ENCODE measurements at regions of chr4 and their contacts with region 1.

Region 1: DNA sequence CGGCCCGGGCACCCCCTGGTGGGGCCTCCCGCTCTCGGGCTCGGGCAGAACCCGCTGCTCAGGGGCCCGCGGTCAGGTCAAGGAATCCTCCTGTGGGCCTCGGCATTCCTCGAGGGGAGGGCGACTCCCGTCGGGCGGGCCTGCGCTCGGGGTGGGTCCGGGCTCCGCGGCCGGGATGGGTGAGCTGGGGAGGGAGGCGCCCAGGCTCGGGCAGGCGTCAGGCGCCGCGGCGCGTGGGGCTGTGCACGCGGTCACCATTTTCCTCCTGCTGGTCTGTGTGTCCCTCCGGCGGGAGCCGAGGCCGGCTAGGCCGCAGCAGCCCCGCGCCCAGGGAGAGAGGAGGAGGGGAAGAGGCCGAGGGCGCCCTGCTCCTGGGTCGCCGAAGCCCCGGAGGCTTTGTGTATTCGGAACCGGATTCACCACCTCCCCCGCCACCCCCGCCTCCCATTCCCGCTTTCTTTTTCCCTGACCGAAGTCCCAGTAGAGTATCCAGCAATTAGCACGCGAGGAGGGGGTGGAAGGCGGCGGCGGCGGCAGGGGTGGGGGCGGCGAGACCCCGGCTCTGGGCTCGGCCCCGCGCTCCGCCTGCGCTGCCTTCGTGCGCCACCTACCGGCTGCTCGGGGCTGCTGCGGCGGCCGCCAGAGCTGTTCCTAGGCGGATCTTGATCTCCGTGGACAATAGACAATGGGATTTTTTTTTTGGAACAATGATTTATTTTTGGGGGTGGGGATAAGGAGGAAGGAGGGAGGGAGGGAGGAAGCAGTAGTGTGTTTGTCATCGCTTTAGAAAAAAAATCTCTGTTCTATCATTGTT is 99.0 kb upstream of the MAML3 start:
- DNase-seq: peak; percentile 75
- ATAC-seq: peak; percentile 68
- H3K4me3 Mint-ChIP-seq: peak overlapping the region; percentile 73
- H3K27ac Mint-ChIP-seq: no peak overlapping the region
- H3K4me1 Mint-ChIP-seq: peaks cover 61% of the 10 kb centered on the region
- H3K27me3 Mint-ChIP-seq: peaks cover 49% of the 10 kb centered on the region
- CTCF ChIP-seq: peak; percentile 94

Region 2: DNA sequence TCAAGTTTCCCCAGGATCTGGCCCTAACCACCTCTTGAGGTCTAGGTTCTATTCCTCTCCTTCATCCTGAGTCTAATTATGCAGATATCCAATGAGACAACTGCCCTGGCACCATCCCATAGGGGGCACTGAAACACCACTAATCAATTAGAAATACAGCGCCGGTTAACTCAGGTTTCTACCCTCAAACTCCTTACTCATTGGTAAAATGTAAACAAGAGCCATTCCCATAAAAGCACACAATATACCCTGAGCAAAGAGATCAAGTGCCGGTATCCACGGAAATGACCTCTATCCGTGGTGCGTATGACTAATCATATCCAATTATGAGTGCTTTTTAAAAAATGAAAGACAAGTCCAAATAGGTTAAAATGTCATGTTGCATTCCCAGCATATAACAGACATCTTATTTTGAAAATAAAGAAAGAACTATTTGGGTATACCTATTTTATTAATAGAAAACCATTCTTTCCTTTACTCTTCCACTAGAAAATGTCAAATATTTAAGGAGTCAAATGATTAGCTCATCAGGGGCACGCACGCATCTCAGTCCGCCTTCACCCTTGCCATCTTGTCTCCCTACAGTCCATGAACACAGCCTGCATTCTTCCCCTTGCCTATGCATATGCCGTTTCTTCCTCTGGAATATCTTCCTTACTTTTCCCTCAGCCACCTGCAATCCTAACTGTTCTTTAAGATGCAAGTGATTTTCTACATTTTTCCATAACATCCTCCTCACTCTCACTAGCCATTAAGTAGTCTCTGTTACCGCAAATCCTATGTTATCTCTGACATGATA is 240.1 kb before region 1 on chr4:
- CTCF ChIA-PET with region 1: interaction called, 33 read pairs
- POLR2A ChIA-PET with region 1: interaction called, 3 read pairs
- DNase-seq: peak; percentile 60
- ATAC-seq: peak; percentile 99
- H3K4me3 Mint-ChIP-seq: no peak overlapping the region
- H3K27ac Mint-ChIP-seq: peak overlapping the region; percentile 28
- H3K4me1 Mint-ChIP-seq: peaks cover 13% of the 10 kb centered on the region
- H3K27me3 Mint-ChIP-seq: no peaks in the 10 kb centered on the region
- CTCF ChIP-seq: no peak; the same call in 1 of the 2 replicates

Region 3: GRCh38 chr4:140049024-140049848 is 203.7 kb before region 1 on chr4:
- CTCF ChIA-PET with region 1: interaction called, 60 read pairs
- POLR2A ChIA-PET with region 1: interaction called, 3 read pairs
- DNase-seq: peak; percentile 55
- ATAC-seq: peak; percentile 84
- H3K4me3 Mint-ChIP-seq: peak overlapping the region; percentile 58
- H3K27ac Mint-ChIP-seq: peak overlapping the region; percentile 98
- H3K4me1 Mint-ChIP-seq: peaks cover 63% of the 10 kb centered on the region
- H3K27me3 Mint-ChIP-seq: no peaks in the 10 kb centered on the region
- CTCF ChIP-seq: no peak

Region 4: DNA sequence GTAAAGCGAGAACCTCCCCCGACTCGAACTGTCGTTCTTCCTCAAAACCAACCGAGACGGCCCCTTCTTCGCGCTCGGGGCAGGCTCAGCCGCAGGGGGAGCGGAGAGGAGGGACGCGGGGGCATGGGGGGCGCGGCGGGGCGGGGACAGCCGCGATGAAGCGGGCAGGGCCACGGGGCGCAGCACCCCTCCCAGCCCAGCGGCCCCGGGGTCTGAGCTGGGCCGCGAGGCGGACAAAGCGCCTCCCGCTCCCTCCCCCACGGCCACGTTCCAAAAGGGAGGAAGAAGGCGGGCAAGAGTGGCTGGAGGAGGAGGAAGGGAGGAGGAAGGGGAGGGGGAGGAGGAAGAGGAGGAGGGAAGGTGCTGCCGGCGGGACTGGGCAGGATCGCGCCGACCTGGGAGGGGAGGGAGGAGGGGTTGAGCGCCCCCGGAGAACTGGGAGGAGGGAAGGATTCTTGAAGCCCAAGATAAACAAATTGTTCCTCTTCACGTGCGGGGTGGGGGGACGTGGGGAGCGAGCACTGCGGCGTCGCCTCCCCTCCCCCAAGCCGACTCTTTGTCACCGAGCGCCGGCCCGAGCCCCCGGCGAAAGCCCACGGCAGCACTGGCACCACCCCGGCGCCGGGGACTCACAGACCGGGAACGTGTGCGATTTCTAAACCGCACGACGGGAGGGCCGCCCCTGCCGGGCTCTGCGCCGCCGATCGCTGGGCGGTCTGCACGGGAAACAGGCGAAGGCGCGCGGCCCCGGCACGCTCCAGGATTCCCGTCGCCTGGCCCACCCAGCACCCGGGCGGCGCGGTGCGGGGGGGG is 101.9 kb before region 1 on chr4:
- CTCF ChIA-PET with region 1: interaction called, 12 read pairs
- POLR2A ChIA-PET with region 1: interaction called, 6 read pairs
- DNase-seq: peak; percentile 79
- ATAC-seq: peak; percentile 33
- H3K4me3 Mint-ChIP-seq: peak overlapping the region; percentile 98
- H3K27ac Mint-ChIP-seq: peak overlapping the region; percentile 92
- H3K4me1 Mint-ChIP-seq: peaks cover 38% of the 10 kb centered on the region
- H3K27me3 Mint-ChIP-seq: peaks cover 6% of the 10 kb centered on the region; the same call in 1 of the 2 replicates
- CTCF ChIP-seq: no peak

Region 5: GRCh38 chr4:140237606-140237986 is 15.4 kb before region 1 on chr4:
- CTCF ChIA-PET with region 1: interaction called, 26 read pairs
- POLR2A ChIA-PET with region 1: interaction called, 20 read pairs
- DNase-seq: peak; percentile 68
- ATAC-seq: peak; percentile 85
- H3K4me3 Mint-ChIP-seq: peak overlapping the region; percentile 63
- H3K27ac Mint-ChIP-seq: peak overlapping the region; percentile 100
- H3K4me1 Mint-ChIP-seq: peaks cover 68% of the 10 kb centered on the region
- H3K27me3 Mint-ChIP-seq: no peaks in the 10 kb centered on the region; the same call in 1 of the 2 replicates
- CTCF ChIP-seq: no peak

Region 6: GRCh38 chr4:140266991-140267426 is 14.1 kb after region 1 on chr4:
- CTCF ChIA-PET with region 1: interaction called, 16 read pairs
- POLR2A ChIA-PET with region 1: no interaction called
- DNase-seq: no peak
- ATAC-seq: peak; percentile 14; the same call in 1 of the 2 replicates
- H3K4me3 Mint-ChIP-seq: no peak overlapping the region
- H3K27ac Mint-ChIP-seq: no peak overlapping the region
- H3K4me1 Mint-ChIP-seq: peaks cover 13% of the 10 kb centered on the region
- H3K27me3 Mint-ChIP-seq: peaks cover 3% of the 10 kb centered on the region; the same call in 1 of the 2 replicates
- CTCF ChIP-seq: no peak

Region 7: GRCh38 chr4:140382732-140383131 is 129.8 kb after region 1 on chr4:
- CTCF ChIA-PET with region 1: no interaction called
- POLR2A ChIA-PET with region 1: no interaction called
- DNase-seq: no peak
- ATAC-seq: no peak
- H3K4me3 Mint-ChIP-seq: no peak overlapping the region
- H3K27ac Mint-ChIP-seq: 0 out of 2 replicates have a peak overlapping the region, but pooled peaks have one; percentile 20
- H3K4me1 Mint-ChIP-seq: 0 out of 2 replicates have a peak, but pooled peaks cover 2% of the 10 kb centered on the region
- H3K27me3 Mint-ChIP-seq: no peaks in the 10 kb centered on the region
- CTCF ChIP-seq: no peak

Region 8: GRCh38 chr4:140579278-140579677 is 326.3 kb after region 1 on chr4:
- CTCF ChIA-PET with region 1: no interaction called
- POLR2A ChIA-PET with region 1: no interaction called
- DNase-seq: peak; percentile 30
- ATAC-seq: peak; percentile 67
- H3K4me3 Mint-ChIP-seq: no peak overlapping the region
- H3K27ac Mint-ChIP-seq: no peak overlapping the region
- H3K4me1 Mint-ChIP-seq: no peaks in the 10 kb centered on the region
- H3K27me3 Mint-ChIP-seq: peaks cover 28% of the 10 kb centered on the region
- CTCF ChIP-seq: no peak